Left ventricle myocardium inferior (tissue), 1 donor: ENCODE measurements at regions of chr19 and their contacts with region 1.

Region 1: GRCh38 chr19:46392243-46392801 is 21.0 kb downstream of the CCDC8 start:
- DNase-seq: no peak
- H3K4me3 ChIP-seq: no peak overlapping the region
- H3K27ac ChIP-seq: no peak overlapping the region
- H3K4me1 ChIP-seq: no peaks in the 10 kb centered on the region
- H3K27me3 ChIP-seq: no peaks in the 10 kb centered on the region
- CTCF ChIP-seq: no peak

Region 2: GRCh38 chr19:46319613-46320012 is 72.7 kb before region 1 on chr19:
- intact Hi-C with region 1: no loop called
- DNase-seq: no peak
- H3K4me3 ChIP-seq: no peak overlapping the region
- H3K27ac ChIP-seq: peak overlapping the region; percentile 12
- H3K4me1 ChIP-seq: no peaks in the 10 kb centered on the region
- H3K27me3 ChIP-seq: no peaks in the 10 kb centered on the region
- CTCF ChIP-seq: no peak

Region 3: DNA sequence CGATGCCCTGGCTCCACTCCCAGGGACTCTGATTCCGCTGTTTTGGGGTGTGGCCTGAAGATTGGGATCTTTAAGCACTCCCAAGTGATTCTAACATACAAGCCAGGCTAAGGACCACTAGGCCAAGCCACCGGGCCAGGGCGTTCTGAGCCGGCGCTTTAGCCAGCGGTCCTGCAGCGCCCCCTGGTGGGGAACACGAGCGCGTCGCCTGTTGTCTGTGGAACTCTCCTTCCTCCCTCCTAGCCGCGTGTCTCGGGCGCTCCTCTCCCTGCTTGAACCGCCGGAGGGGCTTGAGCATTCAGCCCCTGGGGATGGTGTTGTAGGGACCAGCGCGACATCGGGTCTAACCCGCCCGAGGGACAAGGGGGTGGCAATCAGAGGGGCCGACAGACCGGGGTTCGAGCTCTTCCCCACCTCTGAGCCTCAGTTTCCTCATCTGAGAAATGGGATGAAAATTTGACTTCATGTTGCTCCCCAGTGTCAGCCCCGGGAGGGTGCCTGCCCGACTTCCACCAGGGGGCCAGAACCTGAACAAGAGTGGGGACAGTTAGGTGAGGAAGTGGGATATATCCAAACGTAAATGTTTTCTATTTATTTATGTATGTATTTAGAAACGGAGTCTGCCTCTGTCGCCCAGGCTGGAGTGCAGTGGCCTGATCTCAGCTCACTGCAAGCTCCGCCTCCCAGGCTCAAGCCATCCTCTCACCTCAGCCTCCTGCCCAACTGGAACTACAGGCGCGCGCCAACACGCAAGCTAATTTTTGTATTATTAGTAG is 121.3 kb after region 1 on chr19:
- intact Hi-C with region 1: loop called (anchors 10 kb)
- DNase-seq: peak; percentile 78
- H3K4me3 ChIP-seq: no peak overlapping the region
- H3K27ac ChIP-seq: no peak overlapping the region
- H3K4me1 ChIP-seq: peaks cover 7% of the 10 kb centered on the region
- H3K27me3 ChIP-seq: peaks cover 21% of the 10 kb centered on the region
- CTCF ChIP-seq: peak; percentile 97